ENCODE measurements at regions of chr9 and their contacts with region 1.

Region 1: DNA sequence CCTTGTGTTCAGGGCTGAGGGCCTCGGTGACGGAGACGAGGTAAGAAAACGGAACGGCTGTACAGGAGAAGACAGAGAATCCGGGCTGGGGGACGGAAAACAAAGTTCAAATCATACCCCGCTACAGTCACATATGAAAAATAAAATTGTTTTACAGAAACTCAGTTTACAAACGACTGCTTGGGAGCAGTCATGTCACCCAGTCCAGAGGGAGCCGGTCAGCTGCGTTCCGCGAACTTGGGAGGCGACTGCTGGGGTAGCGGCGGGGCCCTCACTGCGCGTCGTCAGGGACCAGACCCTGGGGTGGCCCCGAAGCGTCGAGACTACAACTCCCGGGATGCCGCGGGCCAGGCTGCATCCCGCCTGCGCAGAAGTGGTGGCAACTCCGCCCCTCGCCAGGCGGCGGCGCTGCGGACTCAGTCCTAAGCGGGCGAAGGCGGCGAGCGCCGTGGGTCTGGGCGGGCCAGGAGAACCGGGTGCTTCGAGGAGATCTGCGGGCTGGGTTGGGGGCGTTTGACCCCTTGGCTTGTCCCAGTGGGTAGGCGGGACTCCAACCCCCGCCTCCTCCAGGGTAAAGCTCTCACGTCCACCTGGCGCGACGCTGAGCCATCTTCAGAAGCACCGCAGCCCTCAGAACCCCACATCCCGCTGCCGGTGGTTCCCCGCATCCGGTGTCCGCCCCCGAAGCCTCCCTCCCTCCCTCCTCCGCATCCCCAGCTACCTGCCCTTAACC is 4.0 kb downstream of the SIT1 start:
- DNase-seq: peak; percentile 95
- ATAC-seq: peak; percentile 90
- H3K4me3 Mint-ChIP-seq: peak overlapping the region; percentile 99
- H3K27ac Mint-ChIP-seq: peak overlapping the region; percentile 97
- H3K4me1 Mint-ChIP-seq: peaks cover 47% of the 10 kb centered on the region
- H3K27me3 Mint-ChIP-seq: no peaks in the 10 kb centered on the region

Region 2: DNA sequence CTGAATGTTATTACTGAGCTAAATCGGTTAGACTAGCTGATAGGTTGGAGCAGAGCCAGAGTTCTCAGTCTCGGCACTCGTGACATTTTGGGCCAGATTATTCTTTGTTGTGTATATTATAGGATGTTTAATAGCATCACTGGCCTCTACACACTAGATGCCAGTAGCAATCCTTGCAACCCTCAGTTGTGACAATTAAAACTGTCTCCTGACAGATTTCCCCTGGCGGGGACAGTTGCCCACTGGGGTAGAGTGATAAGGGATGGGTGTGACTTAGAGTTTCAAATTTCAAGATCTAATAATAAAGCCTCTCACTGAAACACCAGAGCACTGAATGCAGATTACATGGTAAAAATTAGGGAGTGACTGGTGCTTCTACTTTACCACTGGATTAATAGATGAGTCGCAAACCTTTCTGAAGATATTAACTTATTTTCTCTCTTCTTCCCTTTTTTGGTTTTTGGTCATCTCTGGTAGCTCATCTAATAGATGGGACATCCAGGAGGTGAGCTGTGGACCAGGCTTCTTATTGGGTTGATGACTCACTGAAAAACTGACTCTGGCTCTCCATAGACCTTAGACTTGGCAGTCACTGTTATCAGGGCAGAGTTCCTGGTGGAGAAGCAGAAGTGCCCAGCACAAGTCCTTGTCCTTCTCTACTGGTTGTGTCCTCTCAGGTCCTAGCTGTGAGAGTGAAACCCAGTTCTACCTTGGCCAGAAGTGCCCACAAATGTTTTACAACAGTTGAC is 334.6 kb before region 1 on chr9:
- CTCF ChIA-PET with region 1: no interaction called
- DNase-seq: no peak
- ATAC-seq: no peak
- H3K4me3 Mint-ChIP-seq: no peak overlapping the region
- H3K27ac Mint-ChIP-seq: no peak overlapping the region
- H3K4me1 Mint-ChIP-seq: no peaks in the 10 kb centered on the region
- H3K27me3 Mint-ChIP-seq: peaks cover 16% of the 10 kb centered on the region

Region 3: GRCh38 chr9:35367451-35367850 is 279.2 kb before region 1 on chr9:
- CTCF ChIA-PET with region 1: no interaction called
- DNase-seq: no peak
- ATAC-seq: no peak
- H3K4me3 Mint-ChIP-seq: no peak overlapping the region
- H3K27ac Mint-ChIP-seq: no peak overlapping the region
- H3K4me1 Mint-ChIP-seq: no peaks in the 10 kb centered on the region
- H3K27me3 Mint-ChIP-seq: no peaks in the 10 kb centered on the region

Region 4: GRCh38 chr9:35628389-35628991 is 18.2 kb before region 1 on chr9:
- CTCF ChIA-PET with region 1: interaction called, 31 read pairs
- DNase-seq: no peak
- ATAC-seq: no peak
- H3K4me3 Mint-ChIP-seq: no peak overlapping the region
- H3K27ac Mint-ChIP-seq: no peak overlapping the region
- H3K4me1 Mint-ChIP-seq: peaks cover 6% of the 10 kb centered on the region
- H3K27me3 Mint-ChIP-seq: no peaks in the 10 kb centered on the region

Region 5: GRCh38 chr9:35636135-35636876 is 10.4 kb before region 1 on chr9:
- CTCF ChIA-PET with region 1: interaction called, 31 read pairs
- DNase-seq: no peak
- ATAC-seq: no peak
- H3K4me3 Mint-ChIP-seq: no peak overlapping the region
- H3K27ac Mint-ChIP-seq: no peak overlapping the region
- H3K4me1 Mint-ChIP-seq: peaks cover 48% of the 10 kb centered on the region
- H3K27me3 Mint-ChIP-seq: no peaks in the 10 kb centered on the region

Region 6: DNA sequence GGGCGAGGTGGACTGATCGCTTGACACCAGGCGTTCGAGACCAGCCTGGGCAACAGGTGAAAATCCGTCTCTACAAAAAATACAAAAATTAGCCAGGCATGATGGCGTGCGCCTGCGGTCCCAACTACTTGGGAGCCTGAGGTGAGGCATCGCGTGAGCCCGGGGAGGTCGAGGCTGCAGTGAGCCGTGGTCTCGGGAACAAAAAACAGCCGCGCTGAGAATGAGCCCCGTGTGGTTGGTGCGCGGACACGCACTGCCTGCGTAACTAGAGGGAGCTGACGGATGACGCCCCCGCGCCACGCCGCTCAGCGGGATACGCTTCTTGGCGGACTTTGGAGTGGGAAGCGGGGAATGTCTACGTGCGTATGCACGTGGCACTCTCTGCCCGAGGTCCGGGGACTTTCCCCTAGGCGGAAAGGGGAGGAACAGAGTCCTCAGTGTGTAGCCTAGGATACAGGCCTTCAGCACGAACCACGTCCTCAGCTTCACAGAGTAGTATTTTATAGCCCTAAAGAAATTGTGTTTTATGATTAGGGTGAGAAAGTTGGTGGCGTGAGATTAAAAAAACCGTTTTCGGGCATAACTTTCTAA is 10.9 kb after region 1 on chr9 and contains the start of gene RMRP:
- CTCF ChIA-PET with region 1: interaction called, 208 read pairs
- DNase-seq: peak; percentile 95
- ATAC-seq: peak; percentile 92
- H3K4me3 Mint-ChIP-seq: peak within 1 kb of the TSS; percentile 84
- H3K27ac Mint-ChIP-seq: peak within 1 kb of the TSS; percentile 95
- H3K4me1 Mint-ChIP-seq: peaks cover 61% of the 10 kb centered on the region
- H3K27me3 Mint-ChIP-seq: peaks cover 4% of the 10 kb centered on the region
- total RNA-seq, gene RMRP: 6,751 to 13,083 TPM

Region 7: GRCh38 chr9:36276781-36277181 is 630.1 kb after region 1 on chr9:
- CTCF ChIA-PET with region 1: no interaction called
- DNase-seq: no peak
- ATAC-seq: no peak
- H3K4me3 Mint-ChIP-seq: no peak overlapping the region
- H3K27ac Mint-ChIP-seq: no peak overlapping the region
- H3K4me1 Mint-ChIP-seq: no peaks in the 10 kb centered on the region
- H3K27me3 Mint-ChIP-seq: no peaks in the 10 kb centered on the region